ENCODE measurements at regions of chr1 and their contacts with region 1.

Region 1: GRCh38 chr1:46527474-46528296 is 23.8 kb downstream of the KNCN start:
- DNase-seq: peak; percentile 48
- H3K4me3 ChIP-seq: no peak overlapping the region
- CTCF ChIP-seq: peak; percentile 93

Region 2: GRCh38 chr1:46477153-46477929 is 50.3 kb before region 1 on chr1:
- in situ Hi-C with region 1: loop called (anchors 5 kb)
- DNase-seq: peak; percentile 11
- H3K4me3 ChIP-seq: no peak overlapping the region
- CTCF ChIP-seq: peak; percentile 89

Region 3: GRCh38 chr1:46489638-46490405 is 37.9 kb before region 1 on chr1 and contains the start of gene DMBX1:
- in situ Hi-C with region 1: no loop called
- DNase-seq: no peak
- H3K4me3 ChIP-seq: no peak within 1 kb of the TSS
- CTCF ChIP-seq: no peak

Region 4: GRCh38 chr1:46622344-46622743 is 94.7 kb after region 1 on chr1:
- in situ Hi-C with region 1: no loop called
- DNase-seq: no peak
- H3K4me3 ChIP-seq: no peak overlapping the region
- CTCF ChIP-seq: peak; percentile 43